Mucosa of descending colon (tissue), 3 donors: ENCODE measurements at regions of chr5 and their contacts with region 1.

Region 1: GRCh38 chr5:119943148-119943547 is 313.8 kb downstream of the FAM170A start:
- DNase-seq: no peak
- ATAC-seq: no peak
- H3K4me3 ChIP-seq: no peak overlapping the region
- H3K4me1 ChIP-seq: no peaks in the 10 kb centered on the region
- CTCF ChIP-seq: no peak

Region 2: DNA sequence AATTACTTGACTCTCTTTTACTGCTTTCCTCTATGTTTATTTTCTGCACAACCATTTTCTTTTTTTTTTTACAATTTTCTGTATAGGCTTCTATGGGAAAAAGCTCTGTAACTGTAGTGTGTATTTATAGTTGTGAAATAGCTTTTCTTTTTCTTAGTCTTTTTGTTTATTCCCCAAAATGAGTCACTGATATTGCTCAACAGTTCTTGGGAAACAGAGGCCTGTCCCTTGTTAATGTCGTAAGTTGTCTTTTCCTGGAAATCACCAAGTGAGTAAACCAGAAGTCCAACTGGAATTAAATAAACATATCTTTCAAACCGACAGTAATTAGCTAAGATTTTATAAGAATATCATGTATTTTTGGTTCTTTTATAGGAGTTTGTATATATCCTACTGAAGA is 195.9 kb after region 1 on chr5:
- intact Hi-C with region 1: no loop called
- DNase-seq: peak in 1 of 3 donors; percentile 15
- ATAC-seq: peak; percentile 69
- H3K4me3 ChIP-seq: no peak overlapping the region
- H3K4me1 ChIP-seq: peaks cover 3% of the 10 kb centered on the region
- CTCF ChIP-seq: no peak

Region 3: DNA sequence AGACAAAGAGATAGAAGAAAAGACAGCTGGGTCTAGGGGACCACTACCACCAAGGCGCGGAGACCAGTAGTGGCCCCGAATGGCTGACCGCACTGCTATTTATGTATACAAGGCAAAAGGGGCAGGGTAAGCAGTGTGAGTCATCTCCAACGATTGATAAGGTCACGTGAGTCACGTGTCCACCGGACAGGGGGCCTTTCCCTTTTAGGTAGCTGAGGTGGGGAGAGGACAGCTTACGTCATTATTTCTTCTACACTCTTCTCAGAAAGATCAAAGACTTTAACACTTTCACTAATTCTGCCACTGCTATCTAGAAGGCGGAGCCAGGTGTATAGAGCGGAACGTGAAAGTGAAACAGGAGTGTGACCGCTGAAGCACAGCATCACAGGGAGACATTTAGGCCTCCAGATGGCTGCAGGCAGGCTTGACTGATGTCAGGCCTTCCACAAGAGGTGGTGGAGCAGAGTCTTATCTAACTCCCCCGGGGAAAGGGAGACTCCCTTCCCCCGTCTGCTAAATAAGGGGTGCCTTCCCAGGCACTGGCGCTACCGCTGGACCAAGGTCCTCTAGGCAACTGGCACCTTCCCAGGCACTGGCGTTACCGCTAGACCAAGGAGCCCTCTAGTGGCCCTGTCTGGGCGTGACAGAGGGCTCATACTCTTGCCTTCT is 514.8 kb after region 1 on chr5:
- intact Hi-C with region 1: loop called in 1 of 2 experiments (anchors 10 kb)
- DNase-seq: peak; percentile 74 to 87 (median 85)
- ATAC-seq: peak; percentile 92
- H3K4me3 ChIP-seq: no peak overlapping the region
- H3K4me1 ChIP-seq: no peaks in the 10 kb centered on the region
- CTCF ChIP-seq: peak; percentile 59